ENCODE measurements at regions of chr12 and their contacts with region 1.

Region 1: GRCh38 chr12:77152623-77153193 is 87.3 kb upstream of the E2F7 start:
- DNase-seq: no peak

Region 2: DNA sequence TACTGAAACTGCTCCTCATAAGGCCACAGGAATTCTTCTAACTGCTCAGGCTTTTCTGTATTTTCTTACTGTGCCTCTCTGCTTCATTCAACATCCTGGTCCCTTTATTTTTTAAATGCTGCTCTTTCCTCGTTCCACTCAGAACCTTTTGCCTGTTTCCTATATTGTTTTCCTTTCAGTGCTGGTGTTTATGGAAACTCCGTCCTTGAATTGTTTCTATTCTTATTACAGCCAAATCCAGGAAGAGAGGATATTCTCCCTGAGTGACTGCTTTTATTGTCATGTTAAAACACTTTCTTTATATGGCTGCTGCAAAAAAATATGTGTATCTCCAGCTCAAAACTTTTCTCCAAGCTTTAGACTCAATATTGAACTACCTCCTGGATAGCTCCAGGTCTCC is 85.7 kb after region 1 on chr12:
- intact Hi-C with region 1: no loop called
- DNase-seq: no peak

Region 3: GRCh38 chr12:77685112-77685511 is 532.4 kb after region 1 on chr12:
- intact Hi-C with region 1: loop called (anchors 2 kb)
- DNase-seq: no peak

Measured in cardiac septum (tissue), 1 donor.